BJ (cell line): ENCODE measurements at regions of chr6 and their contacts with region 1.

Region 1: GRCh38 chr6:126788861-126789365 is 329.6 kb upstream of the RSPO3 start:
- DNase-seq: no peak
- H3K4me3 ChIP-seq: no peak overlapping the region
- H3K27me3 ChIP-seq: no peaks in the 10 kb centered on the region
- CTCF ChIP-seq: no peak

Region 2: DNA sequence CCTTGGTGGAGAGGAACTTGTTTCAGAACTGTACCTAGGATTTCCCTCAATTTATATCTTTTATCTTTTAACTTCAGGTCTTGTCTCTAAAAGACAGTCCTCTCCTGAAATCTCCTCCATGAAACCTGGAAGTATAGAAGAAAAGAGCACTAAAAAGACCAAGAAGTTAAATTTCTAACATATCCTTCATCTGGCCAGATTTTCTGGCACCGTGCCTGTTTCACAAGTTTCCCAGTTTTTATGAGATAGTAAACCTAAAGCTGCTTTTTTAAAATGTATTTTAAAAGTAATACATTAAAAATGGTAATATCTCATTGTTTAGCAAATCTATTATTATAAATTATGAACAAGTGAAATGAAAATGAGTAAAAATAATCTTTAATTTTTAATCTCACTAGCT is 18.7 kb before region 1 on chr6:
- CTCF ChIA-PET with region 1: no interaction called
- POLR2A ChIA-PET with region 1: no interaction called
- DNase-seq: no peak
- H3K4me3 ChIP-seq: no peak overlapping the region
- H3K27me3 ChIP-seq: no peaks in the 10 kb centered on the region
- CTCF ChIP-seq: no peak

Region 3: DNA sequence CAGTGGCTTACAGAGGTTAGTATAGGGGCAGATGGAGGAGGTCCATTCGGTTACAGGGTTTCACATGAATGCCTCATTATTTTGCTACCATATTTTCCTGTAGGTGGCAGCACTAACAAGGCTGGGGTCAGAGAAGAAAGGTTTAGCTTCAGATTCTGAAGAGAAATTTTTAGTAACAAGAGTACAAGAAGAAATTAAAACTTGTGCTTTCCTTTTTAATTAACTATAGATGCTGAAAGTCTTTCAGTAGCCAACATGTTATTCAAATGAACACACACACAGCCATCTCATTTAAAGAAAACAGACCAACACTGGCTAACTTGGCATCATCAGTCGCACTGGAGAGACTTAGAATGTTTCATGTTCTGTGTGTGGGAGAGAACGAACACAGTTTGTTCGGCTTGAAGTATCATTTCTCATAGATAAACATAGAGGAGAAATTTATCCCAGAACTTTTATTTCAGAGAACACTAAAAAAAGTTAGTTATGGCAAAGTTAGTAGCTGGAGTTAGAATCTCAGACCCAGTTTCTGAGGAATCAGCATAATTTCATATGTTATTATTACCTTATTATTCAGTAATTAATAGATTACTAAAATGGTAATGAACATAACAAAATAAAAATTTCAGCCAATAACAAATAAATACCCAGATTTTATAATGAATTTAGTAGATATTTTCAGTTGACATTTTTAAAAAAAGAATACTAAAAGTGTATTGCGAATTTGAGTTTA is 15.6 kb after region 1 on chr6:
- CTCF ChIA-PET with region 1: interaction called, 12 read pairs
- POLR2A ChIA-PET with region 1: no interaction called
- DNase-seq: no peak
- H3K4me3 ChIP-seq: no peak overlapping the region
- H3K27me3 ChIP-seq: no peaks in the 10 kb centered on the region
- CTCF ChIP-seq: peak; percentile 77

Region 4: DNA sequence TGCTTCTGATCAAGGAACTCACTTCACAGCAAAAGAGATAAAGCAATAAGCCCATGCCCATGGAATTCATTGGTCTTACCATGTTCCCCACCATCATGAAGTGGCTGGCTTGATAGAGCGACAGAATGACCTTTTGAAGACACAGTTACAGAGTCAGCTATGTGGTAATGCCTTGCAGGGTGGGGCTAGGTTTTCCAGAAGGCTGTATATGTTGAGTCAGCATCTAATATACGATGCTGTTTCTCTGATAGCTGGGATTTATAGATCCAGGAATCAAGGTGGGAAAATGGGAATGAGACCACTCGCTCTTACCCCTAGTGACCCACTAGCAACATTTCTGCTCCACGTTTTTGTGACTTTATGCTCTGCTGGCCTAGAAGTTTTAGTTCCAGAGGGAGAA is 108.8 kb after region 1 on chr6:
- CTCF ChIA-PET with region 1: no interaction called
- POLR2A ChIA-PET with region 1: no interaction called
- DNase-seq: no peak
- H3K4me3 ChIP-seq: no peak overlapping the region
- H3K27me3 ChIP-seq: no peaks in the 10 kb centered on the region
- CTCF ChIP-seq: no peak